ENCODE measurements at regions of chr4 and their contacts with region 1.

Region 1: DNA sequence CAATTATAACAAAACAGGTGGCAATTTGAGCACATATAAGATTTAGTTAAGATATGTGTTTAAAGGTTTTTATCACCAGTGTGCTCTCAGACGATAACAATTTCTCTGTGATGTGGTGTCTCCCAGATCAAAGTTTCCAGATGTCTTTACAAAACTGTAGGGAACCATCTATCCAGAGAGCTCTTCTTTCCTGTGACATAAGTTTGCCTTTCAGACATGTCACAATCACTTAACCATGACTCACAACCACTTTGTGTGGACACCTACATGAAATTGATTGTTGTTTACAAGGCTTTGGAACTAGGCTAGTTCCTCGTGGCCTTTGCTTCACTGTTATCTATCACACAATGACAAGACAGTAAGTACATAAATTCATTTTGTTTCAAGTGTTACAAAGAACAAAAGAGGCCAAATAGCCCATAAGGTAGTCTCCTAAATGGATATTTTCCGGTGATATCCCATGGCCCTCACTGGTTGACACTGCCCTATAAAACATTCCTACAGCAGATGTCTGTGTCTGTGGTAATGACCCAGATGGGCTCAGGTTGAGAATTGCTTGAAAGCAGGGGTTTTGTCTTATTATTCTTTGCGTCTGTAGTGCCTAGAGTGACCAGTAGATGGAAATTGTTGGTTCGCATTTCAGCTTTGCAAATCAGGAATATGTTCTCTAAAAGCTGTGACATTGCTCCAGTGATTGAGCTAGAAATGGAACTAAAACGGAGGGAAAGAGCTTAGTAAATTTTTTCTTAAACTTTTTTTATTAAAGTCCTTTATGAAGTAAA is 297.8 kb upstream of the FAM241A start:
- DNase-seq: no peak
- H3K4me3 ChIP-seq: no peak overlapping the region
- H3K27me3 ChIP-seq: no peaks in the 10 kb centered on the region
- CTCF ChIP-seq: peak; percentile 47

Region 2: GRCh38 chr4:111641955-111642579 is 205.4 kb before region 1 on chr4:
- CTCF ChIA-PET with region 1: interaction called, 10 read pairs
- POLR2A ChIA-PET with region 1: no interaction called
- DNase-seq: peak; percentile 55
- H3K4me3 ChIP-seq: no peak overlapping the region
- H3K27me3 ChIP-seq: no peaks in the 10 kb centered on the region
- CTCF ChIP-seq: peak; percentile 91